Heart left ventricle (tissue), 16 donors: ENCODE measurements at regions of chr12 and their contacts with region 1.

Region 1: GRCh38 chr12:124480469-124481256 is 86.7 kb downstream of the NCOR2 start:
- DNase-seq: peak in 3 of 5 donors; percentile 67 to 80 (median 76)
- ATAC-seq: peak in 2 of 4 donors; percentile 30 to 49
- H3K4me3 ChIP-seq: no peak overlapping the region
- H3K27ac ChIP-seq: peak overlapping the region in 8 of 12 donors; percentile 17 to 66 (median 31)
- H3K4me1 ChIP-seq: peaks cover 5 to 57% (median 20%) of the 10 kb centered on the region in 12 donors
- H3K27me3 ChIP-seq: no peaks in the 10 kb centered on the region
- CTCF ChIP-seq: peak in 2 of 12 donors; percentile 13 to 25
- POLR2A ChIP-seq: no peak

Region 2: DNA sequence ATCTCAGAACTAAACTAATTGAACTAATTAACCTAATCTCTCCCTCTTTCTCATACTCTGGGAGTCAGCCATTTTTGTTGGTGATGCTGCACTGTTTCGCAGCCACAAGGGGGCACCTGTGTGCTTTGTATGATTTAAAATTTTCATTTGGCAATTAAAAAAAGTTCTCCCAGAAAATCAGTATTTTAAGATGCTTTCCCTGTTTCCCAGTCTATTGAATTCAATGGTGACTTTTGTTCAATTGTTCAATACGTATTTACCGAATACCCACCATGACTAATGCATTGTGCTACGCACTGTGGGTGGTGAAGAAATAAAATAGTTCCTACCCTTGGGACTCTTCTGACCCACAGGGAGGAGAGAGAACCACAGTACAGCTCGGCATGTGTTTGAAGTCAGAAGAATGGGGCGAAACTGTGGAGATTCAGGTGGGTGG is 444.0 kb before region 1 on chr12:
- intact Hi-C with region 1: loop called in 1 of 10 experiments (anchors 10 kb)
- DNase-seq: peak in 1 of 5 donors; percentile 49
- ATAC-seq: peak in 3 of 4 donors; percentile 35 to 55 (median 51)
- H3K4me3 ChIP-seq: no peak overlapping the region
- H3K27ac ChIP-seq: no peak overlapping the region
- H3K4me1 ChIP-seq: peaks cover 0 to 9% (median 0%) of the 10 kb centered on the region in 12 donors
- H3K27me3 ChIP-seq: no peaks in the 10 kb centered on the region
- CTCF ChIP-seq: peak; percentile 84 to 99 (median 94)
- POLR2A ChIP-seq: no peak